Common myeloid progenitor, CD34-positive (primary cell): ENCODE measurements at regions of chr20 and their contacts with region 1.

Region 1: GRCh38 chr20:45436732-45437391 is 20.9 kb downstream of the PIGT start:
- DNase-seq: peak; percentile 85 to 91 (median 89)
- H3K4me3 ChIP-seq: peak overlapping the region; percentile 22 to 83 (median 60)
- H3K27ac ChIP-seq: peak overlapping the region; percentile 41 to 62
- H3K4me1 ChIP-seq: peaks cover 0 to 30% (median 14%) of the 10 kb centered on the region in 4 experiments
- H3K27me3 ChIP-seq: no peaks in the 10 kb centered on the region

Region 2: GRCh38 chr20:45362804-45363610 is 73.9 kb before region 1 on chr20 and contains the start of gene SYS1:
- CTCF ChIA-PET with region 1: interaction called, 353 read pairs
- POLR2A ChIA-PET with region 1: interaction called, 8 read pairs
- DNase-seq: peak; percentile 98 to 99 (median 98)
- H3K4me3 ChIP-seq: peak within 1 kb of the TSS; percentile 59 to 92 (median 85)
- H3K27ac ChIP-seq: peak within 1 kb of the TSS; percentile 89 to 95
- H3K4me1 ChIP-seq: peaks cover 15 to 58% (median 44%) of the 10 kb centered on the region in 4 experiments
- H3K27me3 ChIP-seq: no peaks in the 10 kb centered on the region

Region 3: DNA sequence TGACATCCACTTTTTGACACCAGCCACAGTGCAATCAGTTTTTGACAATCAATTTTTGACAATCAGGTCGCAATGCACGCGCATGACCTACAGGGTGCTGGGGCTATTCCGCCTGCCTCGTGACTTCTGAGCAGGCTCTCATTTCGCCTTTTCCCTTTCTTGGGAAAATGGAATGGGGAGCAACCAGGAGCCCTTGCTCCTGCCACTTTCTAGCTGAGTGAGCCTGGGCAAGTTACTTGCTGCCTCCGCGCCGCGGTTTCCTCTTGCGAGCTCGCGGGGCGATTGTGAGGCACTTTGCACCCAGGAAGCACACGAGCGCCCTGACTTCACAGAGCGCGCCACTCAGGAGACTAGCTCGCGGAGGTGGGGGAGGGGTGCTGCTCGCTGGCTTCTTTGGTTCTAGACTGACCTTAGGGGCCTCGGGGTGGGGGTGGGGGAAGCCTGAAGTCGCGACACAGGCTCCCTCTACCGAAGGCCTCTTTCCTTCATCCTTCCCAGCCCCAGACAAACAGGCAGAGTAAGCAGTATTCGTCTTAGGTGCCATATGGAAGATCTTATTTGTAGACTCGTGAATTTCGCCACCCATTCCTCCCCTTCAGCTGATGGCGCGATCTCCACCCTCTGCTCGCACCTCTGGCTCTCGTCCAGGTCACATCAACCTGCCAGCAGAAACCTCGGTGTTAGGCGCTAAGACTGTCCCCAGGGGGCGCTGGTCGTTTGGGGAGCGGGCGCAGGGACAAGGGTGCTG is 63.3 kb before region 1 on chr20:
- CTCF ChIA-PET with region 1: interaction called, 353 read pairs
- POLR2A ChIA-PET with region 1: interaction called, 12 read pairs
- DNase-seq: peak; percentile 87 to 90 (median 89)
- H3K4me3 ChIP-seq: peak overlapping the region; percentile 34 to 88 (median 63)
- H3K27ac ChIP-seq: no peak overlapping the region
- H3K4me1 ChIP-seq: peaks cover 3 to 14% (median 12%) of the 10 kb centered on the region in 4 experiments
- H3K27me3 ChIP-seq: no peaks in the 10 kb centered on the region

Region 4: GRCh38 chr20:45387274-45387673 is 49.6 kb before region 1 on chr20:
- CTCF ChIA-PET with region 1: interaction called, 10 read pairs
- POLR2A ChIA-PET with region 1: interaction called, 3 read pairs
- DNase-seq: no peak
- H3K4me3 ChIP-seq: no peak overlapping the region
- H3K27ac ChIP-seq: no peak overlapping the region
- H3K4me1 ChIP-seq: no peaks in the 10 kb centered on the region
- H3K27me3 ChIP-seq: no peaks in the 10 kb centered on the region

Region 5: DNA sequence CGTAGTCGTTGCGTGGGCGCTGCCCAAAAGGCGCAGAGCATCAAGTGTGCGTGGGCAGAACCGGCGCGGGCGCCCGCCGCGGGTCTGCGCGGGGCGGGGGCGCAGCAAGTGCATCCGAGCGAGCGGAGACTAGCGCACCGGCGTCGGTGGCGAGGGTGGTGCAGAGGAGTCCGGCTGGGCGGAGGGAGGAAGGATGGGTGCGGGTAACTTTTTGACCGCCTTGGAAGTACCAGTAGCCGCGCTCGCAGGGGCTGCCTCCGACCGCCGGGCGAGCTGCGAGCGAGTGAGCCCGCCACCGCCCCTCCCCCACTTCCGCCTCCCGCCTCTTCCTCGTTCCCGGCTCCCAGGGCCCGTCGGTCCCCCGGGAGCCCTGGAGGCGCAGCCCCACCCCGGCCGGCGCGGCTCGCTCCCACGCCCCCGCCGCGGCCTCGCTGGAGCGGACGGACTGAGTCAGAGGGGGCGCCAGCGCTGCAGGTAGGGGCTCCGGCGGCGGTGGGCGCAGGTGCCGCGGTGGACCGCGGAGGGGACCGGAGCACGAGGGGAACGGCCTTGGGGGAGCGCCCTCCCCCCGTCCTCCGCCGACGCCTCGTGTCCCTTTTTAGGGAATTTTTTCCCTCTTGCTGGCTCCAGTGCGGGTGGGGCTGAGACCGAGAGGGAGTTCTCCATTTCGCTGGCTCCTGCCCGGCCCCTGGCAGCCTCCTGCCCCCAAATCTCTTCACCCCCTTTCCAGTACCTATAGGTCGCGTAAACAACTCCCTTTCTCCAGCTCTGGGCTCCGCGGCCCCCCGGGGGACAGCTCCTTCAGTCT is 30.4 kb before region 1 on chr20:
- CTCF ChIA-PET with region 1: interaction called, 13 read pairs
- POLR2A ChIA-PET with region 1: no interaction called
- DNase-seq: peak in 2 of 3 donors; percentile 16 to 52
- H3K4me3 ChIP-seq: peak overlapping the region; percentile 60 to 87 (median 74)
- H3K27ac ChIP-seq: no peak overlapping the region
- H3K4me1 ChIP-seq: peaks cover 2 to 38% (median 34%) of the 10 kb centered on the region in 4 experiments
- H3K27me3 ChIP-seq: peaks cover 4 to 14% (median 9%) of the 10 kb centered on the region in 5 experiments

Region 6: DNA sequence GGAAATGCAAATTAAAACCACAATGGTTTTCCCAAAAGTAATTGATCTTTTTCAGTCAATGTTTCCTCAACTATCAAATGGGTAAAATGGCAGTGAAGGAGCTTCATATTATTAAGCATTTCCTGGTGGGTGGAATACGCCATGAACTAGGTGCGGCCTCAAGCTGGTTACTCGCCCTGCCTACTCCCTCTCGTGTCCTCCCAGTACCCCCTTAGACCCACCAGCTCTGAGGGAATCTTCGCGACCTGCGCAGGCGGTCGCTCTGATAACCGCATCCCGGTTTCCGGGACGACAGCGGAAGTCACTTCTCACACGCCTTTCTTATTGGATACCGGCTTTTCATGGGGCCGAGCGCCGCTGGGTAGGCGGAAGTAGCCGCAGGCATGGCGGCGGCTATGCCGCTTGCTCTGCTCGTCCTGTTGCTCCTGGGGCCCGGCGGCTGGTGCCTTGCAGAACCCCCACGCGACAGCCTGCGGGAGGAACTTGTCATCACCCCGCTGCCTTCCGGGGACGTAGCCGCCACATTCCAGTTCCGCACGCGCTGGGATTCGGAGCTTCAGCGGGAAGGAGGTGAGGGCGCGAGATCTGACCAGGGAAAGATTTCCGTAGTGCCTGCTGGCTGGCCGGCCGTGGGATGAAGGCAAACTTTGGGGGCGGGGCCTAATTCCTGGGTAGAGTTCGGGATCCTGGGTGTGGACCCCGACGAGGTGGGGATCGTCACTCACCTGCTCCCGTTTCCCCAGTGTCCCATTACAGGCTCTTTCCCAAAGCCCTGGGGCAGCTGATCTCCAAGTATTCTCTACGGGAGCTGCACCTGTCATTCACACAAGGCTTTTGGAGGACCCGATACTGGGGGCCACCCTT is 20.9 kb before region 1 on chr20 and contains the start of gene PIGT:
- CTCF ChIA-PET with region 1: interaction called, 19 read pairs
- POLR2A ChIA-PET with region 1: interaction called, 4 read pairs
- DNase-seq: peak; percentile 96 to 97 (median 96)
- H3K4me3 ChIP-seq: peak within 1 kb of the TSS; percentile 82 to 99 (median 93)
- H3K27ac ChIP-seq: peak within 1 kb of the TSS; percentile 84 to 92
- H3K4me1 ChIP-seq: peaks cover 4 to 23% (median 14%) of the 10 kb centered on the region in 4 experiments
- H3K27me3 ChIP-seq: no peaks in the 10 kb centered on the region

Region 7: DNA sequence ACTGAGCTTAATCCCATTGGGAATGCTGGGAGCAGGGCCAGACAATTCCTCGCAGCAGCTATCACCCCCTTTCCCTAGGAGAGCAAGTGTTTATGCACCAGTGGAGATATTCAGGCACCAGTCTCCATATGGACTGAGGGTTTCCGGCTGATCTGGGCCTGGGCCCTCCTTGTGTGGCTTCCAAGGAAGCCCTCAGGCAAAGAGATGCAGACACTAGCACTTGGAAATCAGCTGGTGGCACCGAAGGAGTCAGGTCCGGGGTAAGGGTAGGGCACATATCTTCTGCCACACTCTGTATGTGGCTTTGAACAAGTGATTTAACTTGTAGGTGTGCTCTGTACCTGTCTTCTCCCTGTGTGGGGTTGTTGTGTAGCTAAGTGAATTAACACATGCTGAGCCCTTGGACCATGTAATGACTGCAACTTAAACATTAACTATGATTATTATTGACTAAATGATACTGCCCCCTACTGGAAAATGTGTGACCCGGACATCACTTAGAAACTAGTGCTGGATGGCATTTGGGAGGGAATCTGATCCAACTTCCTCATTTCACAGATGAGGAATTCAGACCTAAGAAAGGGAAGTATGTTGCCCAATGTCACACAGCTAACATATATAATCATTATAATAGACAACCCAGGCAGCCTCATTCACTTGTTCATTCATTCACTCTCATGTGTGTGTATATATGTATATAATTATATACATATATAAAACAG is 13.4 kb after region 1 on chr20:
- CTCF ChIA-PET with region 1: interaction called, 20 read pairs
- POLR2A ChIA-PET with region 1: no interaction called
- DNase-seq: peak; percentile 86 to 93 (median 92)
- H3K4me3 ChIP-seq: no peak overlapping the region
- H3K27ac ChIP-seq: no peak overlapping the region
- H3K4me1 ChIP-seq: no peaks in the 10 kb centered on the region
- H3K27me3 ChIP-seq: no peaks in the 10 kb centered on the region